ENCODE measurements at regions of chr9 and their contacts with region 1.

Region 1: GRCh38 chr9:110690962-110691549 is 22.5 kb downstream of the MUSK start:
- DNase-seq: no peak
- ATAC-seq: no peak

Region 2: DNA sequence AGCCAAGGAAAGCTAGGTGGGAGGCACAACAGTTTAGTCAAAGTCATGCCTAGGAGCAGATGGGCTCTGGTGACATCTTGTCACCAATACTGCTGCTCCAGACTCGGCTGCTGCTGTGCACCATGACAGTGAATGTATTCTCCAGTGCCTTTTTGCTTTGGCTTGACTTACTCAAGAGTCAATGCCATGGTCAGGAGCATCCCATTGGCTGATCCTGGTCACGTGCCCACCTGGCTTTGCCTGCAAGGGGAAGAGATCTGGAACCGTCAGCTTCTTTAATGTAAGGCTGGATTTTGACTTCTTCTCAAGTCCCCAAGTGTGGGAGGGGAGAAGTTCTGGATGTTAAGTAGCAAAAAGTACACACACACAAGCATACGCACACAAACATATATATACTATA is 42.4 kb before region 1 on chr9:
- intact Hi-C with region 1: loop called (anchors 1 kb)
- DNase-seq: no peak
- ATAC-seq: no peak

Measured in Right ventricle myocardium inferior (tissue), 1 donor.